Ascending aorta (tissue), 2 donors: ENCODE measurements at regions of chr2 and their contacts with region 1.

Region 1: GRCh38 chr2:96509114-96509846 is 4.1 kb upstream of the NEURL3 start:
- DNase-seq: peak; percentile 53 to 95
- H3K4me3 ChIP-seq: peak overlapping the region in 1 of 2 donors; percentile 25
- H3K27ac ChIP-seq: no peak overlapping the region
- H3K4me1 ChIP-seq: peaks cover 8 to 15% of the 10 kb centered on the region in 2 donors
- H3K27me3 ChIP-seq: no peaks in the 10 kb centered on the region
- CTCF ChIP-seq: peak; percentile 94 to 98 (median 96)

Region 2: GRCh38 chr2:96145036-96145847 is 364.0 kb before region 1 on chr2 and contains the start of gene DUSP2:
- intact Hi-C with region 1: loop called (anchors 2 kb)
- DNase-seq: peak; percentile 82 to 89
- H3K4me3 ChIP-seq: peak within 1 kb of the TSS; percentile 76 to 78
- H3K27ac ChIP-seq: peak within 1 kb of the TSS; percentile 78 to 83
- H3K4me1 ChIP-seq: peaks cover 16 to 30% of the 10 kb centered on the region in 2 donors
- H3K27me3 ChIP-seq: no peaks in the 10 kb centered on the region
- CTCF ChIP-seq: peak in 2 of 3 experiments; percentile 10 to 18
- total RNA-seq, gene DUSP2: 7.2 TPM

Region 3: GRCh38 chr2:96305091-96305978 is 203.9 kb before region 1 on chr2 and contains the start of gene SNRNP200:
- intact Hi-C with region 1: loop called (anchors 1 kb)
- DNase-seq: peak; percentile 30 to 91
- H3K4me3 ChIP-seq: peak within 1 kb of the TSS; percentile 84 to 85
- H3K27ac ChIP-seq: peak within 1 kb of the TSS; percentile 73 to 82
- H3K4me1 ChIP-seq: peaks cover 4 to 13% of the 10 kb centered on the region in 2 donors
- H3K27me3 ChIP-seq: no peaks in the 10 kb centered on the region
- CTCF ChIP-seq: no peak
- total RNA-seq, gene SNRNP200: 57.4 TPM

Region 4: DNA sequence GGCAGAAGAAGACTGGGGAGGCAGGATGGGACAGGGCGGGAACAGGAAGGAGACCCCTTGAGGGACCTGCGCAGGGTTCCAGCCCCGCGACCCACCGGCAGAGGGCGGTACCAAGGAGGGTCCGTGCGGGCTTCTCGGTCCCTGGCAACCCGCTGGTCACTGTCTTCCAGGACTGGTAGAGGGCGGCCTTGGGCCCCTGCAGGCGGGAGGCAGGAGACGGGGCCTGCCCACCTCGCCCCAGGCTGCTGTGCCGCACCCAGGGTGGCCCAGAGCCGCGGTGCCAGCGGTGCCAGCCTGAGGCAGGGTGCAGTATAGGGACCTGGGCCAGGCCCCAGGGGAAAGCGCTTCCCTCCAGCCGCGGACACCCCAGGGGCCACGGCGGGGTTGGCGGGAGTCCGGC is 38.6 kb before region 1 on chr2:
- intact Hi-C with region 1: loop called (anchors 5 kb)
- DNase-seq: peak in 1 of 2 donors; percentile 72
- H3K4me3 ChIP-seq: peak overlapping the region; percentile 43 to 61
- H3K27ac ChIP-seq: no peak overlapping the region
- H3K4me1 ChIP-seq: peaks cover 0 to 7% of the 10 kb centered on the region in 2 donors
- H3K27me3 ChIP-seq: no peaks in the 10 kb centered on the region
- CTCF ChIP-seq: peak; percentile 54 to 69 (median 61)

Region 5: GRCh38 chr2:96536445-96537065 is 27.3 kb after region 1 on chr2 and contains the start of gene ARID5A:
- intact Hi-C with region 1: loop called (anchors 1 kb)
- DNase-seq: peak; percentile 87 to 98
- H3K4me3 ChIP-seq: peak within 1 kb of the TSS; percentile 83 to 99
- H3K27ac ChIP-seq: peak within 1 kb of the TSS; percentile 96 to 99
- H3K4me1 ChIP-seq: peaks cover 28 to 66% of the 10 kb centered on the region in 2 donors
- H3K27me3 ChIP-seq: no peaks in the 10 kb centered on the region
- CTCF ChIP-seq: peak; percentile 40 to 47 (median 46)
- total RNA-seq, gene ARID5A: 267 TPM